Thyroid gland (tissue), 4 donors: ENCODE measurements at regions of chrX and their contacts with region 1.

Region 1: DNA sequence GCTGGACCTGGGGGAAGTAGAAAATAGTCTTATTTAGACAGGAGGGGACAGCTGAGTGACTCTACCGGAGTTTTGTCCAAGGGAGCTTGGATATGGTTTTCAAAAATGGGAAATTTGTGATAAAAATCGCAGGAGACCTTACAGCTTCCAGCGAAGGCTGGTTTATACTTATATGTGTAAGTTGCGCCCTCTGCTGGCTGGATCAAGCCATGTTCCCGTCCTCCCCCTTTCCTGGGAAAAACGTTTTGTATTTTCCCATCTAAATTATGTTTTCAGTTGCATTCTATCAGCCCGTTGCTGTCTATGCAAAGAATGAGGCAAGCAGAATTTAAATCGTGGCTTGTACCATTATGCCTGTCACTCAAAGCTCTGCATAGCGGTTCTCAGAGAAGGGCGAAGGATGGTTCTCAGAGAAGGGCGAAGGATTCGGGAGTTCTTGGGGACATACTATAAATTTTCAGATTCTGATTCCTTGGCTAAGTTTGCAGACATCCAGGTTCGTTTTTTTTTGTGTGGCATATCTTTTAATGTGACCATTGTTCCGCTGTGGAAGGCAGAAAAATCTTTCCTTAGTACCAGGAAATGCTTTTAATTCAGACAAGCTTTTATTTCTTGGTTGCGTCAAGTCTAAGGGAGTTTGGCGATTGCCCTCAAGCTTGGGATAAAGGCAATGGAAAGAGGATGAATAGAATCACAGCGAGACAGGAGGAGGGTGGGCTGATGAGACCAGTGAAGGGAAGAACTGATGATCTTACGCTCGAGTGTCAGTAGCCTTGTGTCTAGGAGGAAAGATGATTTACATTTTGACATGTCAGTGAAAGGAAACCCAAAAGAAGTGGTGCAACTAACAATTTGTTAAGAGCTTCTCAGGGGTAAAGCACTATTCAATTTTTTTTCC is 128.5 kb upstream of the ARX start:
- DNase-seq: peak; percentile 49 to 67
- H3K4me3 ChIP-seq: no peak overlapping the region
- H3K27ac ChIP-seq: no peak overlapping the region
- H3K4me1 ChIP-seq: no peaks in the 10 kb centered on the region
- H3K27me3 ChIP-seq: no peaks in the 10 kb centered on the region
- CTCF ChIP-seq: peak; percentile 37 to 66 (median 58)
- POLR2A ChIP-seq: no peak

Region 2: GRCh38 chrX:24759786-24760185 is 384.5 kb before region 1 on chrX:
- intact Hi-C with region 1: loop called (anchors 10 kb)
- DNase-seq: no peak
- H3K4me3 ChIP-seq: no peak overlapping the region
- H3K27ac ChIP-seq: no peak overlapping the region
- H3K4me1 ChIP-seq: no peaks in the 10 kb centered on the region
- H3K27me3 ChIP-seq: no peaks in the 10 kb centered on the region
- CTCF ChIP-seq: no peak
- POLR2A ChIP-seq: no peak

Region 3: GRCh38 chrX:24838629-24839028 is 305.7 kb before region 1 on chrX:
- intact Hi-C with region 1: loop called (anchors 10 kb)
- DNase-seq: no peak
- H3K4me3 ChIP-seq: no peak overlapping the region
- H3K27ac ChIP-seq: peak overlapping the region in 2 of 3 donors; percentile 12 to 29
- H3K4me1 ChIP-seq: peaks cover 11 to 12% of the 10 kb centered on the region in 2 donors
- H3K27me3 ChIP-seq: no peaks in the 10 kb centered on the region
- CTCF ChIP-seq: peak in 3 of 6 experiments; percentile 43 to 59 (median 49)
- POLR2A ChIP-seq: no peak

Region 4: GRCh38 chrX:25191403-25191802 is 47.1 kb after region 1 on chrX:
- intact Hi-C with region 1: no loop called
- DNase-seq: no peak
- H3K4me3 ChIP-seq: no peak overlapping the region
- H3K27ac ChIP-seq: no peak overlapping the region
- H3K4me1 ChIP-seq: no peaks in the 10 kb centered on the region
- H3K27me3 ChIP-seq: no peaks in the 10 kb centered on the region
- CTCF ChIP-seq: no peak
- POLR2A ChIP-seq: no peak